ENCODE measurements at regions of chr13 and their contacts with region 1.

Region 1: GRCh38 chr13:98517576-98518310 is 59.2 kb downstream of the STK24 start:
- DNase-seq: peak; percentile 65 to 84 (median 71)
- H3K4me3 ChIP-seq: no peak overlapping the region
- H3K4me3 Mint-ChIP-seq: peak overlapping the region in 7 of 8 donors; percentile 43 to 78 (median 67)
- H3K27ac ChIP-seq: peak overlapping the region; percentile 52
- H3K27ac Mint-ChIP-seq: peak overlapping the region; percentile 76 to 96 (median 91)
- H3K4me1 ChIP-seq: peaks cover 100% of the 10 kb centered on the region
- H3K4me1 Mint-ChIP-seq: peaks cover 71 to 100% (median 89%) of the 10 kb centered on the region in 4 donors
- H3K27me3 ChIP-seq: no peaks in the 10 kb centered on the region
- H3K27me3 Mint-ChIP-seq: no peaks in the 10 kb centered on the region

Region 2: GRCh38 chr13:98377635-98378378 is 139.9 kb before region 1 on chr13:
- CTCF ChIA-PET with region 1: no interaction called
- POLR2A ChIA-PET with region 1: no interaction called
- intact Hi-C with region 1: no loop called
- DNase-seq: no peak
- H3K4me3 ChIP-seq: no peak overlapping the region
- H3K4me3 Mint-ChIP-seq: no peak overlapping the region
- H3K27ac ChIP-seq: no peak overlapping the region
- H3K27ac Mint-ChIP-seq: no peak overlapping the region
- H3K4me1 ChIP-seq: no peaks in the 10 kb centered on the region
- H3K4me1 Mint-ChIP-seq: no peaks in the 10 kb centered on the region
- H3K27me3 ChIP-seq: no peaks in the 10 kb centered on the region
- H3K27me3 Mint-ChIP-seq: peaks cover 7% of the 10 kb centered on the region in 2 donors

Region 3: GRCh38 chr13:98476538-98476966 is 41.2 kb before region 1 on chr13:
- CTCF ChIA-PET with region 1: interaction called, 5 read pairs
- POLR2A ChIA-PET with region 1: interaction called, 3 read pairs
- intact Hi-C with region 1: loop called (anchors 5 kb)
- DNase-seq: peak; percentile 84 to 97 (median 86)
- H3K4me3 ChIP-seq: peak overlapping the region; percentile 1 to 21
- H3K4me3 Mint-ChIP-seq: peak overlapping the region; percentile 63 to 80 (median 74)
- H3K27ac ChIP-seq: peak overlapping the region; percentile 78
- H3K27ac Mint-ChIP-seq: peak overlapping the region; percentile 83 to 98 (median 96)
- H3K4me1 ChIP-seq: peaks cover 58% of the 10 kb centered on the region
- H3K4me1 Mint-ChIP-seq: peaks cover 51 to 69% (median 61%) of the 10 kb centered on the region in 4 donors
- H3K27me3 ChIP-seq: no peaks in the 10 kb centered on the region
- H3K27me3 Mint-ChIP-seq: no peaks in the 10 kb centered on the region

Region 4: DNA sequence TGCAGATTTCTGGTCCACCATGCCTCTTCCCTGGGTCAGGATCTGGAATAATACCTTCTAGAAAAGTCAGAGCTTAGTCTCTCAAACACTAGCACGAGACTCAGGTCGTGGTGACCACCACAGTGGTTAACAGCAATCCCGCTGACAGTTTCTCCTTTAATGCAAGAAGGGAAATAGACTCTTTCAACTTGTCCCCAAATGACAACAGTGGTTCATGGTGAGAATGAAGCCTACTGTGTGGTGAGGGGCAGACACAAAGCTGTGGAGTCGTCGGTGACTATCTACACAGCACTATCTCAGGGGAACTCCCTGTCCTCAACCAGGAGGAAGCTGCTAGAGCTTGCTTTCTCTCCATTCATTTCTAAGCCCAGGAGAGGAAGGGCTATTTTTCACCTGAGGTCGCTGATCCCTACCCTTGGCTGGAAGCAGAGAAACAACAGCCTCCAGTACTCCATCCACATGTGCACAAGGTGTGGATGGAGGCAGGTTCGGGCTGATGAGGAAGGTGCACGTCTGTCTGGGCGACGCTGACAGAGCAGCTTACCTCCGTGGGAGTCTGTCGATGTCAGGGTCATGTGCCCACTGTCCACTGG is 13.3 kb before region 1 on chr13:
- CTCF ChIA-PET with region 1: interaction called, 3 read pairs
- POLR2A ChIA-PET with region 1: interaction called, 9 read pairs
- intact Hi-C with region 1: loop called (anchors 2 kb)
- DNase-seq: peak in 2 of 5 donors; percentile 28 to 62
- H3K4me3 ChIP-seq: no peak overlapping the region
- H3K4me3 Mint-ChIP-seq: peak overlapping the region; percentile 19 to 78 (median 64)
- H3K27ac ChIP-seq: no peak overlapping the region
- H3K27ac Mint-ChIP-seq: peak overlapping the region; percentile 20 to 85 (median 78)
- H3K4me1 ChIP-seq: peaks cover 82% of the 10 kb centered on the region
- H3K4me1 Mint-ChIP-seq: peaks cover 71 to 100% (median 85%) of the 10 kb centered on the region in 4 donors
- H3K27me3 ChIP-seq: no peaks in the 10 kb centered on the region
- H3K27me3 Mint-ChIP-seq: no peaks in the 10 kb centered on the region

Region 5: DNA sequence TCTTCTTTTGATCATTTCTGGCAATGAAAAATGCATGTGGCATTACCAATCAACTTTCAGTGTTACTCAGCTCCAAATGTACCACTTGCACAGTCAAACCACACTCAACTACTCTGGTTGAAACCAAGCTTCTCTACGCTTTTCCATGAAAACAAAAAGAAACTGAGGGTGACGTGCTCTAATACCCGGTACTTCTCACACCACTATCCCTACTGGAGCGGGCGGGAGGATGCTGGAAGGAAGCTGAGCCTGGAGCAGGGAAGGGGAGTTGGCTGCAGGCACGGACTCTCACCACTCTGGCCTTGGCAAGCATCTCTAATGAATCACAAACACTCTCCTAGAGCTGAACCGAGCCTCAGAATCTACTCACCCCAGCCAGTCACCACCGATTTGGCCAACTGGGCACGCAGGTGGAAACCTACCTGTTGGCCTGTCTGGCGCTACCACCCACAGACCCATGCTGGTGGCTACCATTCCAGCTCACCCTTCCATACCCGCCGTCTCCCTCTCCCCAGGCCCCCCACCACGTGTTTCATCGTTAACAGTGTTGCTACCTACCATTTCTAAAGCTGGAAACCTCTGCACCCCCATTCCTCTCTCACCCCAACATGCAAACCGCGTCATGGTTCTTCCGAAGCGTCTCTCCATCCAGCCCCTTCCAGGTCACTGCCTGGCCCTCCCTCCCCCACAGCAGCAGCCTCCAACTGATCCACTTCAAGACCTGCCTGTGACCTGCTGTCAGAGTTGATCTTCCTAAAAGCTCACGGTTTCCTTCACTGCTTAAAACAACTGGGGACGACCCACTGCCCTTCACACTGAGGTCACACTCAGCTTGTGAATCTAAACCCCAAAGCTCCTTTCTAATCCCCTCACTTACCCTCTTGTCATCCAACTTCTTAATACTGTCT is 11.2 kb after region 1 on chr13:
- CTCF ChIA-PET with region 1: no interaction called
- POLR2A ChIA-PET with region 1: interaction called, 11 read pairs
- intact Hi-C with region 1: no loop called
- DNase-seq: no peak
- H3K4me3 ChIP-seq: no peak overlapping the region
- H3K4me3 Mint-ChIP-seq: peak overlapping the region in 7 of 8 donors; percentile 40 to 81 (median 71)
- H3K27ac ChIP-seq: no peak overlapping the region
- H3K27ac Mint-ChIP-seq: peak overlapping the region; percentile 58 to 94 (median 81)
- H3K4me1 ChIP-seq: peaks cover 99% of the 10 kb centered on the region
- H3K4me1 Mint-ChIP-seq: peaks cover 74 to 96% (median 86%) of the 10 kb centered on the region in 4 donors
- H3K27me3 ChIP-seq: no peaks in the 10 kb centered on the region
- H3K27me3 Mint-ChIP-seq: no peaks in the 10 kb centered on the region

Region 6: DNA sequence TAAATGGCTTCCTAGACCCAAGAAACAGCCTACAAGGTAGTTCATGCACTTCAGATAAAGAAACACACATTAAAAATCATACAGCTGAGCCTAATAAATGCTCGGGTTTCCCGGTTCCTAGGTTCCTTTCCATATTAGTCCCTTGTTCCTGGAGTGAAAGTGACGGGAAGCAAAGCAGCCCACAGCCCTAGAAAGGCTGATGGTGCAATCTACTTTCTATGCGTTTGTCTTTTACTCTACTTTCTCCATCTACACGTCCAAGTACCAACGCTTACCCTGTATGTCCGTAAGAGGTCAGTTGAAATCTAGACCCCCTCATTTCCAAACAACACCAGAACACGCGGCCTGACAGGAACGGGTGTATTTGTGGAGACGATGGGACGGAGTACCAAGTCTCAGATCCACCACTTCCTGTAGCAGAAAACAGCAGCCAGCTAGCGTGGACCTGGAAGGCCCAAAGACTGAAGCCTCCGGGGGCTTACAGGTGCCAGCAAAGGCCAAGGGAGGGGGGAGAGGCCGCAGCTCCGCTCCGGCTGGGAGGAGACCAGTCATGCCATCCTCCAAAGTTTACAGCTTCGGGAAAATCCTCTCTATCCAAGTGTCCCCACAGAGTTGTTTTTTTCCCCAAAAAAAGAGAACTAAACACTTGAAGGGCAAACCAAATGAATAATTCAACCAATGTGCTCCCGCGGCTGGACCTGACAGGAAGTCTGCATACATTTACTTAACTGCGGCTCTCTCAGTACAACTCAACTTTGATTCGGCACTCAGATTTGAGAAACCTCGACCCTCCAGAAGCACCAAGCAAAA is 25.0 kb after region 1 on chr13:
- CTCF ChIA-PET with region 1: interaction called, 3 read pairs
- POLR2A ChIA-PET with region 1: no interaction called
- intact Hi-C with region 1: loop called (anchors 2 kb)
- DNase-seq: peak in 2 of 5 donors; percentile 26 to 30
- H3K4me3 ChIP-seq: peak overlapping the region in 1 of 2 donors; percentile 17
- H3K4me3 Mint-ChIP-seq: peak overlapping the region; percentile 68 to 86 (median 81)
- H3K27ac ChIP-seq: peak overlapping the region; percentile 36
- H3K27ac Mint-ChIP-seq: peak overlapping the region; percentile 59 to 93 (median 87)
- H3K4me1 ChIP-seq: peaks cover 95% of the 10 kb centered on the region
- H3K4me1 Mint-ChIP-seq: peaks cover 76 to 98% (median 88%) of the 10 kb centered on the region in 4 donors
- H3K27me3 ChIP-seq: no peaks in the 10 kb centered on the region
- H3K27me3 Mint-ChIP-seq: no peaks in the 10 kb centered on the region

Region 7: DNA sequence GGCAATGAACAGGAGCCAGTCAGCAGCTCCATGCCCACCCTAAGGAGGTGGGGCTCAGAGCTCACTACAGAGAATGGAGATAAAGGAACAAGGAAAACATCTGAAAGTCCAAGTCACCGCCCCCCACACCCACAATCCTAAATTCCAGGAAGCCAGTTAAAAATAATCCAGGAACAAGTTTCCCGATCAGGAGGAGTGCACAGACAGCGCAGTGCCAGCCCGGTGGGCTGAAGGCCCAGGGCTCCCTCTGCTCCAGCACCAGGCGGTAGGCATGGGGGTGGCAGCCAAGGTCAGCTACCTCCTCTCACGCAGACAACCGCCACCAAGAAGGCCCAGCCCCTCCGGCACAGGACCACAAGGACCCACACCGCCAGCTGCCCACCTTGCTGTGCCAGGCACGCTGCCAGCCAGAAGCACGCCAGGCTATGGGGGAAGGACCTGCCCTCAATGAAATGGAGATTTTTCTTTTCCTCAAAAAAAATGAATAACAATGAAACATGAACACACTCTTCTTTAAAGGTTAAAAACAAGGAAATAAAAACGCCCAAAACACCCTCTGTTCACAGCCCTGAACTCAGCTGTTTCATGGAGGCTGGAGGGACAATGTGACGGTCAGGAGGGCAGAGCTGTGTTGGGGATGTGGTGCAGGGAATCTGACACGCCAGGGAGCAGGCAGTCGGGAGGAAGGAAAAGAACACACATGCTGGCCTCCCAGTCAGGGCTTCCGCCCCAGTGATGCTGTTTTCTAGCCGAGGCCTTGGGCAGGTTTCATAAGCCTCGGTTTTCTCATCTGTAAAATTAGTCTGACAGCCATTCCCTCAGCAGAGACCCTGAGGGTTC is 48.2 kb after region 1 on chr13:
- CTCF ChIA-PET with region 1: no interaction called
- POLR2A ChIA-PET with region 1: interaction called, 11 read pairs
- intact Hi-C with region 1: loop called (anchors 5 kb)
- DNase-seq: no peak
- H3K4me3 ChIP-seq: peak overlapping the region; percentile 4 to 39
- H3K4me3 Mint-ChIP-seq: peak overlapping the region; percentile 63 to 97 (median 86)
- H3K27ac ChIP-seq: peak overlapping the region; percentile 81
- H3K27ac Mint-ChIP-seq: peak overlapping the region; percentile 94 to 98 (median 97)
- H3K4me1 ChIP-seq: peaks cover 93% of the 10 kb centered on the region
- H3K4me1 Mint-ChIP-seq: peaks cover 72 to 98% (median 85%) of the 10 kb centered on the region in 4 donors
- H3K27me3 ChIP-seq: no peaks in the 10 kb centered on the region
- H3K27me3 Mint-ChIP-seq: no peaks in the 10 kb centered on the region

Region 8: GRCh38 chr13:98576963-98577822 is 59.5 kb after region 1 on chr13 and contains the start of gene STK24:
- CTCF ChIA-PET with region 1: interaction called, 3 read pairs
- POLR2A ChIA-PET with region 1: interaction called, 7 read pairs
- intact Hi-C with region 1: loop called (anchors 2 kb)
- DNase-seq: peak; percentile 52 to 73 (median 56)
- H3K4me3 ChIP-seq: peak within 1 kb of the TSS; percentile 74 to 75
- H3K4me3 Mint-ChIP-seq: peak within 1 kb of the TSS; percentile 89 to 97 (median 95)
- H3K27ac ChIP-seq: peak within 1 kb of the TSS; percentile 81
- H3K27ac Mint-ChIP-seq: peak within 1 kb of the TSS; percentile 92 to 97 (median 95)
- H3K4me1 ChIP-seq: peaks cover 34% of the 10 kb centered on the region
- H3K4me1 Mint-ChIP-seq: peaks cover 21 to 42% (median 33%) of the 10 kb centered on the region in 4 donors
- H3K27me3 ChIP-seq: no peaks in the 10 kb centered on the region
- H3K27me3 Mint-ChIP-seq: no peaks in the 10 kb centered on the region
- total RNA-seq, gene STK24: 146 to 147 TPM

Region 9: GRCh38 chr13:98751861-98752466 is 234.2 kb after region 1 on chr13:
- CTCF ChIA-PET with region 1: no interaction called
- POLR2A ChIA-PET with region 1: no interaction called
- intact Hi-C with region 1: no loop called
- DNase-seq: no peak
- H3K4me3 ChIP-seq: no peak overlapping the region
- H3K4me3 Mint-ChIP-seq: peak overlapping the region in 2 of 8 donors; percentile 48 to 68
- H3K27ac ChIP-seq: no peak overlapping the region
- H3K27ac Mint-ChIP-seq: no peak overlapping the region
- H3K4me1 ChIP-seq: no peaks in the 10 kb centered on the region
- H3K4me1 Mint-ChIP-seq: peaks cover 0 to 7% (median 4%) of the 10 kb centered on the region in 4 donors
- H3K27me3 ChIP-seq: peaks cover 16% of the 10 kb centered on the region
- H3K27me3 Mint-ChIP-seq: peaks cover 52 to 68% of the 10 kb centered on the region in 2 donors